ENCODE measurements at regions of chrX and their contacts with region 1.

Region 1: GRCh38 chrX:39242187-39242586 is 440.9 kb downstream of the MID1IP1 start:
- DNase-seq: no peak
- ATAC-seq: peak; percentile 73 to 87 (median 75)
- H3K4me3 ChIP-seq: no peak overlapping the region
- H3K27ac ChIP-seq: no peak overlapping the region
- H3K4me1 ChIP-seq: no peaks in the 10 kb centered on the region
- H3K27me3 ChIP-seq: peaks cover 0 to 14% (median 0%) of the 10 kb centered on the region in 3 donors
- CTCF ChIP-seq: peak; percentile 58

Region 2: GRCh38 chrX:38500866-38501265 is 741.3 kb before region 1 on chrX:
- intact Hi-C with region 1: no loop called
- DNase-seq: no peak
- ATAC-seq: peak; percentile 27 to 91 (median 82)
- H3K4me3 ChIP-seq: no peak overlapping the region
- H3K27ac ChIP-seq: peak overlapping the region; percentile 44
- H3K4me1 ChIP-seq: no peaks in the 10 kb centered on the region
- H3K27me3 ChIP-seq: no peaks in the 10 kb centered on the region
- CTCF ChIP-seq: no peak

Region 3: DNA sequence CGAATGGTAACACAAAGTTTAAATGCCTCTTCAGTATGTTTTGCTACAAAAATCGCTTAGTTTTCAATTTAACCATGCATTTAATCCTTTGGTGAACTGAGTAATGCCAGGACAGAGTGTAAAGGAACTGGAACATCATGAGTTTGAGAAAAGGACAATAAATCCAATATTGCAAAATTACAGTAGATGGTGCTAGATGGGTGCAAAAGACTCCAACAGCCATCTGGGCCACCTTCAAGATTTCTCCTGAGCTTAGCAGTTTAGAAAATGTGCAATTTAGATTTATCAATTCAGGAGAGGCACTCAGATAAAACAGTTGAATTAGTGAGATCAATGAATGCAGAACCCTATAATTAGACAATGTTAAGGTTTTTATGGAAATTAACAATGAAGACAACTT is 474.1 kb before region 1 on chrX:
- intact Hi-C with region 1: loop called in 1 of 2 experiments (anchors 10 kb)
- DNase-seq: no peak
- ATAC-seq: peak in 3 of 4 donors; percentile 44 to 71 (median 48)
- H3K4me3 ChIP-seq: no peak overlapping the region
- H3K27ac ChIP-seq: no peak overlapping the region
- H3K4me1 ChIP-seq: no peaks in the 10 kb centered on the region
- H3K27me3 ChIP-seq: no peaks in the 10 kb centered on the region
- CTCF ChIP-seq: peak; percentile 46

Region 4: DNA sequence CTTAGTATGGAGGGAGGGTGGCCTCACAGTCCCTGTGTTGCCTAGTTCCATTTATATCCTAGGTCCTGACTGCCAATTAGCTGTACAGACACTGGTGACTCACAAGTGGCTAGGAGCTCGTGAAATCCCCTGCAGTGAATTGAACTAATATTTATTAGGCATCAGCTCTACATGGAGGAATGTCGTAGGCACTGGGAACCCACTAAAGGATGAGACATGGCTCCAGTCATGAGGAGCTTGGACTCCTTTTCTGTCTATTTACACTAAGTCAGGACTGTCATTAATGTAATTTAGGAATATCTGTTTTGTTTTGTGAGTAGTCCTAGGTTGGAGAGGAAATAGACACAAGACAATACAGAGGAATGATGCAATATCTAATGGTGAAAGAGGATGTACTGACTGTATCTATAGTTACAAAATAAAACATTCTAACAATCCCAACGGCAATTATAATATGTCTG is 373.2 kb before region 1 on chrX:
- intact Hi-C with region 1: no loop called
- DNase-seq: no peak
- ATAC-seq: peak; percentile 86 to 89 (median 88)
- H3K4me3 ChIP-seq: peak overlapping the region; percentile 48
- H3K27ac ChIP-seq: peak overlapping the region; percentile 75
- H3K4me1 ChIP-seq: no peaks in the 10 kb centered on the region
- H3K27me3 ChIP-seq: peaks cover 0 to 4% (median 0%) of the 10 kb centered on the region in 3 donors
- CTCF ChIP-seq: no peak

Region 5: DNA sequence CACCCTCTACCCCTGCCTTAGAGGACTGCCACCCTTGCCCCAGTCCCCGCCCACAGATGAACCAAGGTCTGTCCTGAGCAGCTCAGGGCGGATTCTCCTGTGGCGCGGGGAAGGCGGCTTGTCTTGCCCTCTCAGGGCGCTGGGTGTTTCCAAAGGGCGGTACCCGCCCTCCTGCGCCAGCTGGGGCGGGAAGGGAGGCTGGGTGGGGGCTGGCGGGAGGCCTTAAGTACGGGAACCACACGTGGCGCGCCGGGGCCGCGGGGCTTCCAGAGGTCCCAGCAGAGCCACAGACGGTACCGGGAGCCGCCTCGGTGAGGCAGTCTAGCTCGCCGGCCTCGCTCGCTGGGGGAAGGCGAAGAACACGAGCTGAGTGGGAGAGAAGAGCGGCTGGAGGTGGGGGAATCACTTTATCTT is 79.9 kb before region 1 on chrX:
- intact Hi-C with region 1: loop called in 1 of 2 experiments (anchors 5 kb)
- DNase-seq: peak; percentile 33 to 60
- ATAC-seq: peak; percentile 46 to 66 (median 56)
- H3K4me3 ChIP-seq: peak overlapping the region; percentile 22
- H3K27ac ChIP-seq: no peak overlapping the region
- H3K4me1 ChIP-seq: no peaks in the 10 kb centered on the region
- H3K27me3 ChIP-seq: peaks cover 0 to 15% (median 0%) of the 10 kb centered on the region in 3 donors
- CTCF ChIP-seq: peak; percentile 11

Region 6: GRCh38 chrX:39309018-39309635 is 66.9 kb after region 1 on chrX:
- intact Hi-C with region 1: no loop called
- DNase-seq: no peak
- ATAC-seq: no peak
- H3K4me3 ChIP-seq: no peak overlapping the region
- H3K27ac ChIP-seq: no peak overlapping the region
- H3K4me1 ChIP-seq: no peaks in the 10 kb centered on the region
- H3K27me3 ChIP-seq: peaks cover 0 to 10% (median 0%) of the 10 kb centered on the region in 3 donors
- CTCF ChIP-seq: no peak